Calu3 (cell line): ENCODE measurements at regions of chr3 and their contacts with region 1.

Region 1: DNA sequence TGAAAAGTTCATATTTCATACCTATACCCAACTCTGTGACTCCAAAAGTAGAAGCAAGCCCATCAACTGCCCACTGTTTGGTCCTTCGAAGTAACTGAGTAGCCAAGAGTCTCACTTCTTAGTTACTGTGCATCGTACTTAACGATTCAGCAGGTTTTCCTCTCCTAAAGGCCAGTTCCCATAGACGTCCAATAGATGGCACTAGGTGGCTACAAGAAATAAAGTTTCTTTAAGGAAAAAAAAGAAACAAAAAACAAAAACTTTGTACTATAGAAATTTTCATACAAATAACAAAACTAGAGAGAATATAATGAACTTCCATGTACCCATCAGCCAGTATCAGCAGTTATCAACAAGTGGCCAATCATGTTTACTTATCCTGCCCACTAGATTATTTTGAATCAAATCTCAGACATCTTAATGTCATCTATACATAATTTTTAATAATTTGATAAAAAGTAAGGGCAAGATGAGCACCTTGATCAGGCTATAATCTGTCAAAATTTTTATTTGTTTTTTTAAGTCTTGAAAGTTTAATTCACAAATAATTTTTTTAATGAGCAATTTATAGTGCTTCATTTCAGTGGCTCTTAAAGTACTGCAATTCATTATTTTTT is 63.8 kb upstream of the ACP3 start:
- DNase-seq: peak; percentile 63
- H3K4me3 Mint-ChIP-seq: no peak overlapping the region
- H3K27ac Mint-ChIP-seq: no peak overlapping the region
- H3K4me1 Mint-ChIP-seq: peaks cover 27% of the 10 kb centered on the region
- H3K27me3 Mint-ChIP-seq: no peaks in the 10 kb centered on the region
- CTCF ChIP-seq: peak; percentile 72

Region 2: GRCh38 chr3:131602011-131602764 is 651.2 kb before region 1 on chr3:
- CTCF ChIA-PET with region 1: no interaction called
- intact Hi-C with region 1: no loop called
- DNase-seq: no peak
- H3K4me3 Mint-ChIP-seq: no peak overlapping the region
- H3K27ac Mint-ChIP-seq: no peak overlapping the region
- H3K4me1 Mint-ChIP-seq: peaks cover 25% of the 10 kb centered on the region
- H3K27me3 Mint-ChIP-seq: no peaks in the 10 kb centered on the region
- CTCF ChIP-seq: no peak

Region 3: DNA sequence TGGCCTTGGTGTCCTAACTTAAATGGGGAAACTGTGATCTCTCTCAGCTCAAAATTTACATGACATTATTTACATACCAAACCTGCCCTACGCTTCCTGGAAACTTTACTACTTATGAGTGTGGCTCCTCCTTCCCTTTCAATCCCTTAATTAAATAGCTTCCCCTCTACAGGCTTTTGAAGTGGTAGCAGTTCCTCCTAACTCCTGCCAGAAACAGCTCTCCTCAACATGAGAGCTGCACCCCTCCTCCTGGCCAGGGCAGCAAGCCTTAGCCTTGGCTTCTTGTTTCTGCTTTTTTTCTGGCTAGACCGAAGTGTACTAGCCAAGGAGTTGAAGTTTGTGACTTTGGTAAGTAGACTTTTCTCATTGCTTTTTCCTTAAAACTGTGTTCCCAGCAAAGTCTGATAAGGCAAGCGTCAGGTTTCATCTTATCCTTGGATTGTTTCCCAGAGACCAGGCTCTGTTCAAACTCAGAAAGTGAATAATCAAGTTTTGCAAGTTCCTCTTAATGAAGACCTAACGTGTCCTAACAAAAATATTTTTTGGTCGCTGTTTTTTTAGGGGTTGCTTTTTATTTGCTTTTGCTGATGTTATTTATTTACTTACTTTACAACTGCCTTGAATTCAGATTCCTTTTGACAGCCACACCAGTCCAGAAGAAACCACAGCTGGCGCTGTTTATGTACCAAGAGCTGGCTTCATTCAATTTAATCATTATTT is 64.0 kb after region 1 on chr3 and contains the start of gene ACP3:
- CTCF ChIA-PET with region 1: interaction called, 11 read pairs
- intact Hi-C with region 1: no loop called
- DNase-seq: peak; percentile 74
- H3K4me3 Mint-ChIP-seq: peak within 1 kb of the TSS; percentile 62
- H3K27ac Mint-ChIP-seq: peak within 1 kb of the TSS; percentile 77
- H3K4me1 Mint-ChIP-seq: peaks cover 33% of the 10 kb centered on the region
- H3K27me3 Mint-ChIP-seq: no peaks in the 10 kb centered on the region
- CTCF ChIP-seq: no peak
- total RNA-seq, gene ACP3: 3.8 and 5.8 TPM in 2 replicates

Region 4: DNA sequence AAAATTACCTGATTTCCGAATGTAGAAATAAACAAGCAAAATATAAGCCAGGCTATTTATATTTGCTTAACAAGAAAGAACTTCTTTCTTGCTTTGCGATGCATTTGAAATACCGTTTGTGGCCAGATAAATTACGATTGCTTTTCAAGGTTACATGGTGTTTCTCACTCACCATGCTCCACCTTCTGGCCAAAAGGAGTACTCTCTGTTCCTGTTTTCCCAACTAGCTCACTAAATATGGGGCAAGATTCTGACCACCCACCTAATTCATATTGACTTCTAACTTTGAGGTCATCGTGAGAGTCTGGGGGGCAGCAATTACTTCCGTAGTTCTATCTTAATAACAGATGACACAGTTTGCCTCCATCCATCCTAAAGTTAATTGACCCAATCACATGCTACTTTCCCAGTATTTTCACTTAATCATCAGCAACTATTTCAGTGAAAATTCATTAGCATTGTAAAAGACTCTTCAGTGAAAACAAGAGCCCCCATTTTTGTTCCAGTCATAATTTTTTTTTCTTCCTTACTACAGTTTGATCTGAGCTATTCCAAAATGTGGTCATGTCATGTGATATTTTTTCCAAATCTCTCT is 89.7 kb after region 1 on chr3:
- CTCF ChIA-PET with region 1: interaction called, 163 read pairs
- intact Hi-C with region 1: loop called (anchors 1 kb)
- DNase-seq: peak; percentile 72
- H3K4me3 Mint-ChIP-seq: no peak overlapping the region
- H3K27ac Mint-ChIP-seq: peak overlapping the region; percentile 35
- H3K4me1 Mint-ChIP-seq: peaks cover 48% of the 10 kb centered on the region
- H3K27me3 Mint-ChIP-seq: no peaks in the 10 kb centered on the region
- CTCF ChIP-seq: peak; percentile 92

Region 5: DNA sequence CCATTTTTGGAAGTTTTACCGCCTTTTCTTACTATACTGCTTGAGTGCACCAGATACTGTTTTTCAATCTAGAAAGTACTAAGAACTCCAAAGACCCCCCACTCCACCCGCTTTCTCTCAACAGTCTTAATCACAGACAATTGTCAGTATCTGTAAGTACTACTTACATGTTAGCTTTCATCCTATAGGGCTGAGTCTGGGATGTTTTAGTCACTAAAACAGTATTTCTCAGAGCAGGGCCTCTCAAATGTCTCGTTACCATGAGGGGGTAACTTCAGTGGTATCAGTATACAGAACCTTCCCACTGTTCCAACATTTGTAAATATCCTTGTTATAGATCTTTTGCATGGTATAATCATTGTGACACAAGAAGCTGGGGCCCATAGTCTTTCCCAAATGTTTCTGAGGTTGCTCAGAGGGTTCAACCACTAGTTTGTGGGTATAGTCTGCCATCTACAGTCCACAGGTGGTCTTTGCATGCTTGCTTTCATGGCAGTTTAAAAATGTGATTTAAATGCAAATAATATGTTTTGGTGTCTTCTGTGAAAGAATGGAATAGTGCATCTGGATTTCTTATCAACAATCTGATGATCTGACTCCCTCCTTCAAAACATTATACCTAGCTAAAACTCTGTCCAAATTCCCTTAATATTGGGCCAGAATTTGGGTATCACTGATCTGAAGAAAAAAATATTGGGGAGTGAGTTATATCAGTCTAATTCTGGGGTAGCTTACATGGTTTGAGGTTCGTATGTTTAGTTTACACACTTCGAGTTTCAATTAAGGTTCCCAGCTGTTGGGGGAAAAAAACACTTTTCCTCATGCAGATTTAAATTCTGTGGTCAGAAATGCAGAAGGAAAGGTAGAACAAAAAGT is 145.9 kb after region 1 on chr3:
- CTCF ChIA-PET with region 1: interaction called, 11 read pairs
- intact Hi-C with region 1: loop called (anchors 1 kb)
- DNase-seq: peak; percentile 63
- H3K4me3 Mint-ChIP-seq: no peak overlapping the region
- H3K27ac Mint-ChIP-seq: no peak overlapping the region
- H3K4me1 Mint-ChIP-seq: no peaks in the 10 kb centered on the region
- H3K27me3 Mint-ChIP-seq: no peaks in the 10 kb centered on the region
- CTCF ChIP-seq: peak; percentile 87

Region 6: DNA sequence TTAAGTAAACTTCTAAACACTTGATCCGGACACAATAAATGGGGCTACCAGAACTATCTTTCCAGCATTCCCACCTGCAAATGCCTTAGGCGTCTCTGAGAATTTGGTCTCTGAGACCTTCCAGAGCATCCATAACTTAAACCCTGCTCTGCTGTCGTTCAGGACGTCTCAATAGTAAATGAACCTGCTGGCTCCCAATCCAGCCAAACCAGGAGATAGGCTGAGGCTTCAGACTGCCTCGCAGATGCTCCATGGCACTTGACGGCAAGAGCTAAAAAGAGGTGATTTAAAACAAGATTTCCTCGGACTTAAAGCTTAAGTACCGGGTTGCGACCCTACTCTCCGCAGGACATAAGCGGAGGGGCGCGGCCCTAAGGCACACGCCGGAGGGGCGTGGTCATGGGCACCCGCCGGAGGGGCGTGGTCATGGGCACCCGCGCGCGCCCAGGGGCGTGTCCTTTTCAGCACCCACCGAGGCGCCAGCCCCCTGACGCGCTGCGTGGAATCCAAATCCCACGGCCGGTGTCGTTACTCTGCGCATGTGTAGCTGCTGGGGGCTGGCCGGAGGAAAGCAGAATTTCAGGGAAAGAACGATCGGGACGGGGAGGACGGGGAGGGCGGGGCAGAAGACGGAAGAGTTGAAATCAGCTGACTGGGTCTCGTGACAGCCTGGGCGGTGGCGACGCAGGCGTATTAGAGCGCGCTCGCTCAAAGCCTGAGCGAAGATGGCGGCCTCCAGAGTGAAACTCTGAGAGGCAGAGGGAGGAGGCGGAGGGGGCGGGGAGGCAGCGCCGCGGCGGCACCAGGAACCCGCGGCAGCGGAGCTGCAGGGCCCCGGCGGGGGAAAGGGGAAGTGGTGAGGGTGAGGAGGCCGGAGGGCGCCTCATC is 163.7 kb after region 1 on chr3 and contains the start of gene DNAJC13:
- CTCF ChIA-PET with region 1: no interaction called
- intact Hi-C with region 1: loop called (anchors 5 kb)
- DNase-seq: peak; percentile 96
- H3K4me3 Mint-ChIP-seq: peak within 1 kb of the TSS; percentile 91
- H3K27ac Mint-ChIP-seq: peak within 1 kb of the TSS; percentile 90
- H3K4me1 Mint-ChIP-seq: peaks cover 33% of the 10 kb centered on the region
- H3K27me3 Mint-ChIP-seq: no peaks in the 10 kb centered on the region
- CTCF ChIP-seq: no peak
- total RNA-seq, gene DNAJC13: 72.4 and 75.6 TPM in 2 replicates

Region 7: DNA sequence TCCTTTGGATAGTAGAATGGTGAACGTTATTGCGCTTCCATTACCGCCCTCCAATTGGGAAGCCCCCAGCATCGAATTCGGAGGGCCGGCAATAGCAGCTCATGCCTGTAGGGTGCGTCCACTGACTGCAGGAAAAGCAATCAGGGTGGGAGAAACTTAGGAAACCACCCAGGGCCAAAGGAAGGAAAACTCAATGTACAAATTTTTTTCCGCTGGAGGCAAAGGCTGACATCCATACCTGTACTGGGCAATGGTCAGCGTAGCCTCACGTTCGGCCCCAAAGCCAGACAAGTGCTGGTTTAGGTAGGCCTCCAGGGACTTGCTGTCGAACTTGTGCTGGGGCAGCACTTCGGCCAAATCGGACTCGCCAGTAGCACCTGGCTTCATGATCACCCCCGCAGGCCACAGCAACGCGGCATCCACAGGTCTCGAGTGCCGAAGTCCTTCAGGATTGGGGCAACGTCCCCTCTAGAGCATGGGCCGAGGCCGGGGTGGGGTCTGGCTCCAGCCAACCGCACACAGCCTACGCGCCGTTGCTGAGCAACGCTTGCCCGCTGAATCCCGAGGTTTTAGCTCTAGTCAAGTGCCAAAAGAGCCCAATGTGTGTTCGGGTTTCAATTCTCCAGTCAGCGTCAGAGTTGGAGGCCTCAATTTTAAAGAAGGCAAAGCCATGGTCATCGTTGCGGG is 406.1 kb after region 1 on chr3 and contains the start of gene ACAD11:
- CTCF ChIA-PET with region 1: no interaction called
- intact Hi-C with region 1: loop called (anchors 10 kb)
- DNase-seq: peak; percentile 78
- H3K4me3 Mint-ChIP-seq: peak within 1 kb of the TSS; percentile 97
- H3K27ac Mint-ChIP-seq: peak within 1 kb of the TSS; percentile 89
- H3K4me1 Mint-ChIP-seq: peaks cover 31% of the 10 kb centered on the region
- H3K27me3 Mint-ChIP-seq: no peaks in the 10 kb centered on the region
- CTCF ChIP-seq: peak; percentile 74
- total RNA-seq, gene ACAD11: 14.6 and 16.3 TPM in 2 replicates